ENCODE measurements at regions of chr20 and their contacts with region 1.

Region 1: DNA sequence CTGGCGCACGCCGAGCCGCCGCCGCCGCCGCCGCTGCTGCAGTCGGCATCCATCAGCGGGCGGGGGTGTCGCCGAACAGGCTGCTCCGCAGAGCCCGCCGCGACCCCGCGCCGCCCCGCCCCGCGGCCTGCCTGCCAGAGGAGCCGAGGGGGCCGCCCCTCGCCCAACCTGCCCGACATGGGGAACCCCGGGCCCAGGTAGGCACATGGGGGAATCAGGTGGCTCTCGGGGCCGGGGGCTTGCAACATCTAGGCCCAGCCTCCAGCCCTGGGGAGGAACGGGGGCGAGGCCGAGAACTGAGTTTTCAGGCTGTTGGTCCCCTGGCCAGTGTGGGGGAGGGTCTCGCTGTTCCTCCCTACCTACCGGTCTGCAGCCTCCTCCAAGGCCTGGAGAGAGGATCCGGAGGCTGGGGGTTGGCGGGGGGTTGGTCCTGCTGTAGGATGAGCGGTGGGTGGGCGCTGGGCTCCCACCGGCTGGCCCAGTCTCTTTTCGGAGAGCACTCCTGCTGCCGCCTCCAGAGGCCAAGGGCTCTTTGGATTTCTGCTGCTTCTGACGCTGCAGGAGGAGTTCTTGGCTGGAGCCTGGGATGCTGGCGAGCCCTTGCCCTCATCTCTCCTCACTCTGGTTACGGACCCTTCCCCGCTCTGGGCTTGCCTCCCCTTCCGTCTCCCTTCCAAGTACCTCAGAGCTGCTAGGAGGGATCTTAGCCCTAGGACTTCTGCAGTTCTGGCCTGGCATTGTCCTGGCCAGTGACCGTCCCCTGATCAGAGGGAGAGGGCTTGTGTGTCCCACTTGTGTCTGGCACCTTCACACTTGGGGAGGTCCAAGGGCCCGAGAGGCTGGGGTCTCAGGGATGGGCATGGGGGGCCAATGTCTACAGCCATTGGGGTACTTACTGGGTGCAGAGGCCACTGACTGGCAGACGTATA is at the start of gene EPB41L1:
- DNase-seq: no peak
- H3K4me3 ChIP-seq: peak within 1 kb of the TSS; percentile 30 to 44 (median 35)
- H3K27ac ChIP-seq: no peak within 1 kb of the TSS
- H3K4me1 ChIP-seq: peaks cover 12% of the 10 kb centered on the region
- H3K27me3 ChIP-seq: no peaks in the 10 kb centered on the region
- CTCF ChIP-seq: no peak
- POLR2A ChIP-seq: no peak
- total RNA-seq, gene EPB41L1: 11.1 and 12.2 TPM in 2 replicates

Region 2: DNA sequence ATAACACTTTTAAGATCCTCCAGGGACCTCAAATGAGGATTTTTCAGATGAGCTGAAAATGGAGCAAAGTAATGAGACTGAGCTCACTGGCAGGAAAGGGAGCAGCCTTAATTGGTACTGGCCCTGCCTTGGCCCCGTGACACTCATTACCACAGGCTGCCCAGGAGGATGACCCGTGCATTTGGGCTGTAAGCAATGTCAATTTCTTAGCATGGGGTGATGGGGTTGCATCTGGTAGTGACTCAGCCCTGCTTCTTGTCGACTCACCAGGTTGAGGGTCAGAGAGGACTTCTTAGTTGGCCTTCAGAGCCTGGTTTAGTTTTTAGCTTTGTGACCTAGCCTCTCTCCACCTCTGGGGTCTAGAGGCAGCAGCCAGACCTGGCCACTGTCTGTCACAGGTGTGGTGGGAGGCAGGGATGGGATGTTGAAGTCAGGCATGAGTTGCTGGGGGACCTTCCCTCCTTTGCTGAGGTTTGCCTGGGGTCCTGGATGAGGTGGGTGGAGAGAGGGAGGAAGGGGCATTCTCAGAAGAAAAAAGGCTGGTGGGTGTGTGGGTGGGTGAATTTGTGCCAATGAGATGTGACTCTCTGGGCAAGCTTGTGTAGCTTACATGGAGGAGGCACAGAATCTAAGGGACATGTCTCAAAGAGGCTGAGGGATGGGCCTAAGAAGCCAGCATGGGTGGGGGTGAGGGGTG is 26.4 kb before region 1 on chr20:
- CTCF ChIA-PET with region 1: no interaction called
- POLR2A ChIA-PET with region 1: no interaction called
- dilution Hi-C with region 1: no loop called
- intact Hi-C with region 1: no loop called
- DNase-seq: no peak
- H3K4me3 ChIP-seq: no peak overlapping the region
- H3K27ac ChIP-seq: no peak overlapping the region
- H3K4me1 ChIP-seq: no peaks in the 10 kb centered on the region
- H3K27me3 ChIP-seq: peaks cover 0 to 1% of the 10 kb centered on the region in 2 experiments
- CTCF ChIP-seq: no peak
- POLR2A ChIP-seq: no peak

Region 3: DNA sequence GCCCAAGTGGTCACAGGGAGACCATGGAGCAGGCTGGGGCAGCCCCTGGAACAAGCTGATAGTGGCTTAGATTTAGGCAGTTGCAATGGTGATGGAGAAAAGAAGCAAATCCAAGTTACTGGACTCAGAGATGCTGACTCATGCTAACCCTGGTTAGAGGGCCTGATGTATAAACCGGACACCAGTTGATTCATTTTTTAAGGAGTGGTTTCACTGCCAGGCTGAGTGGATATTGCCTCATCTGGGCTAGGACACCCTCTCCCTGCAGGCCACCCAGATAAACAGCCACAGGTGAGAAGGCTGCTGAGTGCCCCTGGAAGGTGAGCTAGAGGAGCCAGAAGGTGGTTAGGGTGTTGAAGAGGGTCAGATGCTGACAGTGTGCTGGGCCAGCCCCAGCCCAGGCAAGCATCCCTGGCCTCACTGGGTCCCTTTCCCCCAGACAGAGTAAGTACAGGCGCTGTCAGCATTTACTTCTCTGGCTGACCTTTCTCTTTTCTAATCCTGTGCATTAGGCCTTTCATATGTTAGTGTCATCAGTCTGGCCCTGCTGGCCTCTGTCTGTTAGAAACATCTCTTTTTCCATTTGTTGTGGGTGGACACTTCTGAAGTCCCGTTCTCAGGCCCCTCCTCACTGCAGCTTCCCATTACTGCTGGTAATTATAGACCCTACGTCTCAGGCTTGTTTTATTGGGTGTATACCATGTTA is 13.0 kb after region 1 on chr20:
- CTCF ChIA-PET with region 1: interaction called, 15 read pairs
- POLR2A ChIA-PET with region 1: no interaction called
- dilution Hi-C with region 1: no loop called
- intact Hi-C with region 1: no loop called
- DNase-seq: no peak
- H3K4me3 ChIP-seq: no peak overlapping the region
- H3K27ac ChIP-seq: no peak overlapping the region
- H3K4me1 ChIP-seq: no peaks in the 10 kb centered on the region
- H3K27me3 ChIP-seq: no peaks in the 10 kb centered on the region
- CTCF ChIP-seq: no peak
- POLR2A ChIP-seq: no peak

Region 4: DNA sequence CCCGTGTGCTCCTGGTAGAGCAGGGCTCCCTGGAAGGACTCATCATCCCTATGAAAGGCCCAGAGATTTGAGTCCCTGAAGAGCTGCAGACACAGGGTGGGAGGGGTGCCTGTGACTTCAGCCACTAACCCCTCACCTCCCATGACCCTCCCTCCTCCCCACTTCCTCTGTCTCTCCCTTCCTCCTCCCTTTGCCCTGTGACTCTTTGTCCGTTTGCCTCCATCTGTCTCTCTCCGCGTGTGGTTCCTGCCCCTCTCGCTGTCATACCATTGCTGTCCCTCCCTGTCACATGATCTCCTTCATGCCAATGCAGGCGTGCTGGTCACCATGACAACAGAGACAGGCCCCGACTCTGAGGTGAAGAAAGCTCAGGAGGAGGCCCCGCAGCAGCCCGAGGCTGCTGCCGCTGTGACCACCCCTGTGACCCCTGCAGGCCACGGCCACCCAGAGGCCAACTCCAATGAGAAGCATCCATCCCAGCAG is 18.5 kb after region 1 on chr20:
- CTCF ChIA-PET with region 1: interaction called, 10 read pairs
- POLR2A ChIA-PET with region 1: no interaction called
- dilution Hi-C with region 1: no loop called
- intact Hi-C with region 1: no loop called
- DNase-seq: no peak
- H3K4me3 ChIP-seq: no peak overlapping the region
- H3K27ac ChIP-seq: no peak overlapping the region
- H3K4me1 ChIP-seq: no peaks in the 10 kb centered on the region
- H3K27me3 ChIP-seq: no peaks in the 10 kb centered on the region
- CTCF ChIP-seq: no peak
- POLR2A ChIP-seq: no peak

Measured in endothelial cell of umbilical vein (primary cell).